GM12878 (cell line): ENCODE measurements at regions of chr12 and their contacts with region 1.

Region 1: GRCh38 chr12:12266873-12267741 is at the start of gene LRP6:
- DNase-seq: peak; percentile 40
- ATAC-seq: peak; percentile 92
- H3K4me3 ChIP-seq: peak within 1 kb of the TSS; percentile 92
- H3K27ac ChIP-seq: peak within 1 kb of the TSS; percentile 80
- H3K4me1 ChIP-seq: no peaks in the 10 kb centered on the region
- H3K27me3 ChIP-seq: no peaks in the 10 kb centered on the region
- CTCF ChIP-seq: no peak
- EP300 ChIP-seq: no peak
- POLR2A ChIP-seq: peak; percentile 80
- RAD21 ChIP-seq: no peak
- polyA plus RNA-seq, gene LRP6: 1.5 to 8.4 TPM

Region 2: DNA sequence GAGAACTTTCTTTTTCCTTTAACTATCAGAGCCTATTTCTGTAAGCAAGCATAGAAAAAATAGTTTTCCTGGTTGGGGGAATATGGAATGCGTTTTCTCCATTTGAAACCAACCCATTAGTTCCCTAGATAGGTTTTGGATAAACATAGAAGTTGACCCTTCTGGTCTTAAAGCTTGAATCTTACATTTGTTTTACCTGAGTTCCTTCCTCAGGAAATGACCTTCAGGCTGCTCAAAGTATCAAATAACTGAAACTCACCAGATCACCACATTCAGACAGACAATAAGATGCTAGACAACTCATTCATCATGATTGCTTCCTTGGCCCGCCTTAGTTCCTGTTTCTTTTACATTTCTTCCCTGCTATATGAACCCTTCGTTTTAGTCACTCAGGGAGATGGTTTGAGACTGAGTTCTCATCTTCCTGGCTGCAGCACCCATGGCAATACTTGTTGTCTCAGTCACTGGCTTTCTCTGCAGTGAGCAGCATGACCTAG is 52.4 kb before region 1 on chr12:
- CTCF ChIA-PET with region 1: no interaction called
- POLR2A ChIA-PET with region 1: no interaction called
- RAD21 ChIA-PET with region 1: no interaction called
- SMC1A ChIA-PET with region 1: interaction called, 3 read pairs
- in situ Hi-C with region 1: no loop called
- intact Hi-C with region 1: loop called (anchors 5 kb)
- DNase-seq: peak; percentile 35
- ATAC-seq: peak; percentile 73
- H3K4me3 ChIP-seq: no peak overlapping the region
- H3K27ac ChIP-seq: no peak overlapping the region
- H3K4me1 ChIP-seq: peaks cover 6% of the 10 kb centered on the region
- H3K27me3 ChIP-seq: no peaks in the 10 kb centered on the region
- CTCF ChIP-seq: no peak
- EP300 ChIP-seq: no peak
- POLR2A ChIP-seq: no peak
- RAD21 ChIP-seq: no peak

Region 3: GRCh38 chr12:12236896-12237295 is 30.2 kb before region 1 on chr12:
- CTCF ChIA-PET with region 1: no interaction called
- POLR2A ChIA-PET with region 1: no interaction called
- RAD21 ChIA-PET with region 1: no interaction called
- SMC1A ChIA-PET with region 1: no interaction called
- in situ Hi-C with region 1: no loop called
- intact Hi-C with region 1: no loop called
- DNase-seq: no peak
- ATAC-seq: no peak
- H3K4me3 ChIP-seq: no peak overlapping the region
- H3K27ac ChIP-seq: no peak overlapping the region
- H3K4me1 ChIP-seq: no peaks in the 10 kb centered on the region
- H3K27me3 ChIP-seq: no peaks in the 10 kb centered on the region
- CTCF ChIP-seq: no peak
- EP300 ChIP-seq: no peak
- POLR2A ChIP-seq: no peak
- RAD21 ChIP-seq: no peak

Region 4: GRCh38 chr12:12349711-12350665 is 82.9 kb after region 1 on chr12 and contains the start of gene MANSC1:
- CTCF ChIA-PET with region 1: no interaction called
- POLR2A ChIA-PET with region 1: no interaction called
- RAD21 ChIA-PET with region 1: no interaction called
- SMC1A ChIA-PET with region 1: no interaction called
- in situ Hi-C with region 1: no loop called
- intact Hi-C with region 1: no loop called
- DNase-seq: no peak
- ATAC-seq: peak; percentile 88
- H3K4me3 ChIP-seq: peak within 1 kb of the TSS; percentile 55
- H3K27ac ChIP-seq: no peak within 1 kb of the TSS
- H3K4me1 ChIP-seq: peaks cover 10% of the 10 kb centered on the region
- H3K27me3 ChIP-seq: peaks cover 0 to 3% of the 10 kb centered on the region in 2 experiments; a peak in 2 of 4 replicates
- CTCF ChIP-seq: peak in 2 of 3 experiments; percentile 34 to 49; a peak in 3 of 6 replicates
- EP300 ChIP-seq: no peak
- POLR2A ChIP-seq: peak; percentile 35; the same call in 1 of the 2 replicates
- RAD21 ChIP-seq: no peak
- polyA plus RNA-seq, gene MANSC1: 0.02 to 0.06 TPM